ENCODE measurements at regions of chr14 and their contacts with region 1.

Region 1: DNA sequence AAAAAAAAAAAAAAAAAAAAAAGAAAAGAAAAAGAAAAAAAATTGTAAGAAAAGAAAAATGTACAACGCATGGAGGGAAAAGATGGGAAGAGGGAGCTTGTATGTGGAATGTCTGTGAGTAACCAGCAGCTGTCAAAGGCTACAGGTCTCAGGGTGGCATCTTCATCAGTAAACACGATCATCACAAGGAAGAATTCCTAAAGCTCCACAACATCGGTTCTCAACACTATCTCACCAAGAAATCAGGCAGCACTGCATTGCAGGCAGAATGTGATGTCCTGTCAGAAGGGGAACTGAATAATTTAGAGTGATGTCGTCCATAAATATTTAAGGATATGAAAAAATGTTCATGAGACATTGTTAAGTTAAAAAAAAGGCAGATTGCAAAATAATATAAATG is 964.7 kb downstream of the BCL11B start:
- DNase-seq: no peak
- H3K4me3 ChIP-seq: no peak overlapping the region
- H3K27ac ChIP-seq: no peak overlapping the region
- H3K4me1 ChIP-seq: no peaks in the 10 kb centered on the region
- CTCF ChIP-seq: no peak

Region 2: DNA sequence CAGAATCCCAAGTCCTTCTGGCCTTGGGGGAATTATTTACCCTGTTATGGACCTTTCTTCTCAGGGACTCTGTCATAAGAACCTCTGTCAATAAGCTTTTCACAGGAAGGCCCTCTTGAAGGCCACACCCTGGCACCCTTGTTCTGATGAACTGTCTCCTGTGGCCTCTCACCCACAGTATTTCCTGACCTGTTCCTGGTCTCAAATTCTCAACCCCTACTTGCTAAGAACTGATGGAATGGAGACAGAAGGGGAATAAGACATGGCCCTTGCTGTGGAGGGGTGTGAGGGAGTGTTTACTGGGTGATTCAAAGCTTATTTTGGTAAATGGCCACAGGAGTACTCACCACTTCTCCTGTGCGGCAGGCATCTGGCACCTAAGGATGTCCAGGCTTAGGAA is 118.2 kb before region 1 on chr14:
- CTCF ChIA-PET with region 1: no interaction called
- POLR2A ChIA-PET with region 1: interaction called, 14 read pairs
- intact Hi-C with region 1: no loop called
- DNase-seq: no peak
- H3K4me3 ChIP-seq: no peak overlapping the region
- H3K27ac ChIP-seq: no peak overlapping the region
- H3K4me1 ChIP-seq: no peaks in the 10 kb centered on the region
- CTCF ChIP-seq: no peak

Measured in OCI-LY7 (cell line).